Mammary epithelial cell (primary cell): ENCODE measurements at regions of chr9 and their contacts with region 1.

Region 1: GRCh38 chr9:18297550-18297908 is 176.4 kb upstream of the ADAMTSL1 start:
- DNase-seq: no peak
- H3K4me3 ChIP-seq: peak overlapping the region in 1 of 3 experiments; percentile 20
- H3K27ac ChIP-seq: peak overlapping the region; percentile 50
- H3K4me1 ChIP-seq: peaks cover 15% of the 10 kb centered on the region
- H3K27me3 ChIP-seq: no peaks in the 10 kb centered on the region
- CTCF ChIP-seq: peak; percentile 33 to 42

Region 2: GRCh38 chr9:18274693-18275092 is 22.8 kb before region 1 on chr9:
- CTCF ChIA-PET with region 1: no interaction called
- dilution Hi-C with region 1: no loop called
- in situ Hi-C with region 1: no loop called
- intact Hi-C with region 1: loop called (anchors 2 kb)
- DNase-seq: peak; percentile 56
- H3K4me3 ChIP-seq: peak overlapping the region in 1 of 3 experiments; percentile 18
- H3K27ac ChIP-seq: peak overlapping the region; percentile 98
- H3K4me1 ChIP-seq: peaks cover 11% of the 10 kb centered on the region
- H3K27me3 ChIP-seq: no peaks in the 10 kb centered on the region
- CTCF ChIP-seq: no peak

Region 3: GRCh38 chr9:18359335-18359734 is 61.8 kb after region 1 on chr9:
- CTCF ChIA-PET with region 1: no interaction called
- dilution Hi-C with region 1: no loop called
- in situ Hi-C with region 1: no loop called
- intact Hi-C with region 1: no loop called
- DNase-seq: peak; percentile 48
- H3K4me3 ChIP-seq: no peak overlapping the region
- H3K27ac ChIP-seq: no peak overlapping the region
- H3K4me1 ChIP-seq: peaks cover 9% of the 10 kb centered on the region
- H3K27me3 ChIP-seq: no peaks in the 10 kb centered on the region
- CTCF ChIP-seq: no peak